HAP-1 (cell line): ENCODE measurements at regions of chr1 and their contacts with region 1.

Region 1: DNA sequence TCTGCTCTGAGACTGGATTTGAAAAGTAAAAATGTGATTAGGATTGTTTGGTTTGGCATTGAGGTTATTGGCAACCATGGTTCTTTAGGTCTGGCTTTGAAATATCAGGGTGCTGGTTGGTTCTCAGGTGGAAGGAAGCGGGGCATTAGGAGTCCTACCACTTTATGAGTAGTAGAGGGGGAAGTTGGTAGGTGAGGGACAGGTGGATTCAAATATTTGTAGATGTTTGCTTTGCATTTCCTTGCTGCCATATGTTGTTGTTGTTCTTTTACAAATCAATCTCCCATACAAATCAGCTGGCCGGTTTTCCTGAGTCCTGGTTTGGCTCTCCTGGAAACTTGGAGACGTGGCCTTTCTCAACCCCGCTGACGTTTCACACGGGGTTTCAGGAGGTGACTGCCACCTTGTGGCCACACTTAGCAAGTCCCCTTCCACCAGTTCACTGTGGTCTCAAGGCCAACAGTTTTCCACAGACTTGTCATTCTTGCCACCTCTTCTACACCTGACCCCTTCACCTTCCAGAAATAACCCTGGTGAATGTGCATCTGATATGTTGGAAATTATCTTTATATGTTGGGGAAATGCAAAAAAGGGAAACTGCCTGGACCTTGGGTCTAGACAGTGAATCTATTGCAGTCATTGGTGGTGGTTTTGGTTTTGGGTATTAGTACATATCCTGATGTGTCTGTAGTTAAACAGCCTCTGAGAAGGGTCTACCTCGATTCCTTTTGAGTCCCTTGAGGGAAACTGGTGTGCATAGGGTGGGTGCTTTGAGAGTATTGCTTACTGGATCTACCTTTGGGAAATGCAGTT is 127.0 kb upstream of the KIAA0040 start:
- DNase-seq: peak; percentile 69 to 74
- H3K4me3 ChIP-seq: no peak overlapping the region
- H3K4me1 ChIP-seq: no peaks in the 10 kb centered on the region
- H3K27me3 ChIP-seq: no peaks in the 10 kb centered on the region

Region 2: GRCh38 chr1:175043824-175044223 is 275.8 kb before region 1 on chr1:
- in situ Hi-C with region 1: loop called (anchors 25 kb)
- DNase-seq: no peak
- H3K4me3 ChIP-seq: no peak overlapping the region
- H3K4me1 ChIP-seq: no peaks in the 10 kb centered on the region
- H3K27me3 ChIP-seq: no peaks in the 10 kb centered on the region

Region 3: DNA sequence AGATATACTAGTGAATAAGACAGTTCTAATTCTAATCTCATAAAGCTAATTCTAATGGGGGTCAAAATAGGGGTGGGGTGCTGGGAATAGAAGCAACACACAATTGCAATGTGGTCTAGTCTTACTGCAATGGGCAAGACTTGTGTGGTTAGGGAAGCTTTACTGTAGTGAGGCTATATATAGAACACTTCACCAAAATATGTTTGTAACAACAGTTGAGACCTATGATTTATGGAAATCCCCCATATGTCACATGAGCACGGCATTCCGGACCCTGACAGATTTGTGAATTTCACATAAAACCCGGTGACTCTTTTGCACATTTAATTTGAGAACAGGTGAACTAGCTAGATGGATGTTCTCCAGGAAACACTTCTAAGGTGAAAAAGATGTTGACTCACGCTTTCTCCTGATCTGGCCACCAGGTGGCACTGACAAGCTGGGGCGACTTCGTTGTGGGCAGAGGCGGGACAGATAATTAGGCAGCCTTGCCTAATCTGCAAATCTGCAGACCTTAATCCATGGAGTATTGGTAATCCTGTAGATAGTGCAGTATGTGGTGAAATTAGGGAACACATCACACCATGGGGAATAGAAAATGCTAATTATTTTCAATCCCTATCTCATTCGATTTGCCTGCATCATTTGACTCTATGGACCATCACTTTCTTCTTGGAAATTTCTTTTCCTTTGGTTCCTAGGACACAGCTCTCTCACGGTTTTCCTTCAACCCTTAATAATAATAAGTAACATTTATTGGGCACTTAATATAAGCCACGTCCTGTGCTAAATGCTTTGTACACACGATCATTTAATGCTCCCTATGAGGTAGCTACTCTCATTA is 164.8 kb before region 1 on chr1:
- in situ Hi-C with region 1: loop called (anchors 5 kb)
- DNase-seq: peak; percentile 45 to 81
- H3K4me3 ChIP-seq: no peak overlapping the region
- H3K4me1 ChIP-seq: no peaks in the 10 kb centered on the region
- H3K27me3 ChIP-seq: peaks cover 20% of the 10 kb centered on the region

Region 4: GRCh38 chr1:175237389-175237788 is 82.2 kb before region 1 on chr1:
- in situ Hi-C with region 1: no loop called
- DNase-seq: no peak
- H3K4me3 ChIP-seq: no peak overlapping the region
- H3K4me1 ChIP-seq: no peaks in the 10 kb centered on the region
- H3K27me3 ChIP-seq: no peaks in the 10 kb centered on the region